Activated CD4-positive, alpha-beta memory T cell treated with anti-CD3 and anti-CD28 coated beads, Interleukin-2, amount 10 ng/mL, durations not matched to agents 7 days and 5 days (primary cell): ENCODE measurements at regions of chr10 and their contacts with region 1.

Region 1: GRCh38 chr10:113678690-113679462 is 836 bp upstream of the CASP7 start:
- DNase-seq: peak; percentile 76
- H3K4me3 Mint-ChIP-seq: peak overlapping the region; percentile 98
- H3K27ac Mint-ChIP-seq: peak overlapping the region; percentile 93
- H3K4me1 Mint-ChIP-seq: peaks cover 40% of the 10 kb centered on the region
- H3K27me3 Mint-ChIP-seq: peaks cover 21% of the 10 kb centered on the region

Region 2: GRCh38 chr10:113626809-113627370 is 52.0 kb before region 1 on chr10:
- CTCF ChIA-PET with region 1: no interaction called
- POLR2A ChIA-PET with region 1: no interaction called
- DNase-seq: no peak
- H3K4me3 Mint-ChIP-seq: no peak overlapping the region
- H3K27ac Mint-ChIP-seq: no peak overlapping the region
- H3K4me1 Mint-ChIP-seq: no peaks in the 10 kb centered on the region
- H3K27me3 Mint-ChIP-seq: peaks cover 14% of the 10 kb centered on the region

Region 3: DNA sequence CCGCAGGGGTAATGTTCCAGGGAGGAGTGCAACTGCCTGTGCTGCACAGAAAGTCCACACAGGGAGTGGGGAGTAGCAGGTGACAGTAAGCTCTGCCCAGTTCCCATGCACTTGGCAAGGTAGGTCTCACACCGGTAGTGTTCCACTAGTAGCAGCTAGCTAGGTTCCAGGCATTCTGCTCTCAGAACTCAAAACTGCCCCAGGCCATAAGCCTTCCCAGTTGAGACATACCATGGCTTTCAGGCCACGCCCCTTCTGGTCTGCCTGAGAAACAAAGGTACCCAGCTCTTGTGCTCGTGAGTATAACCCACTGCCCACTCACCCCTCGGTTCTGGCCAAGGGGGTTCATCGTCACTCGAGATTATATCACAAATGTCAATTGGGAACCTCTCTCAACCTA is 13.4 kb after region 1 on chr10:
- CTCF ChIA-PET with region 1: interaction called, 6 read pairs
- POLR2A ChIA-PET with region 1: interaction called, 16 read pairs
- DNase-seq: no peak
- H3K4me3 Mint-ChIP-seq: no peak overlapping the region
- H3K27ac Mint-ChIP-seq: no peak overlapping the region
- H3K4me1 Mint-ChIP-seq: peaks cover 29% of the 10 kb centered on the region
- H3K27me3 Mint-ChIP-seq: no peaks in the 10 kb centered on the region